Left cardiac atrium (tissue), 4 donors: ENCODE measurements at regions of chr4 and their contacts with region 1.

Region 1: GRCh38 chr4:154779362-154779947 is 1.6 kb upstream of the RBM46 start:
- DNase-seq: no peak
- ATAC-seq: no peak

Region 2: GRCh38 chr4:154602404-154603020 is 176.9 kb before region 1 on chr4:
- intact Hi-C with region 1: no loop called
- DNase-seq: no peak
- ATAC-seq: no peak

Region 3: GRCh38 chr4:154634058-154634457 is 145.4 kb before region 1 on chr4:
- intact Hi-C with region 1: loop called (anchors 5 to 10 kb)
- DNase-seq: no peak
- ATAC-seq: no peak

Region 4: GRCh38 chr4:154642373-154643009 is 137.0 kb before region 1 on chr4:
- intact Hi-C with region 1: loop called (anchors 5 to 10 kb)
- DNase-seq: no peak
- ATAC-seq: no peak

Region 5: DNA sequence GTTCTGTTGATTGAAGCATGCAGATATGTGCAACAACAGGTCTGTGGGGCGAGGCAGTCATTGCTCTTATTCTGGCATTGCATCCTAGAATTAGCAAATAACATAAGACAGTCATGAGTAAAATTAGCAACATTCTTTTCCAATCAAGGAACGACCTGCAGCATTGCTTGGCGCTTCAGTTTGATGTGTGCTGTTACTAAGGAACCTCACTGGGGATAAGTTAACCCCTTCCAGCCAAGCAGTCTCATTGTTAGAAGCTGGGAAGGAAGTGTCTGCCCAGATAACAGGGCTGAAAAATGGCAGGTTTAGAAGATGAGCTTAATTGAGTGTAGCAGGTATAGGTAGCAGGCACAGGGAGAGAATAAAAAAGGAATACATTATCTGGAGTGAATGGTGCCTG is 57.1 kb after region 1 on chr4:
- intact Hi-C with region 1: no loop called
- DNase-seq: no peak
- ATAC-seq: no peak